HCT116 (cell line): ENCODE measurements at regions of chr1 and their contacts with region 1.

Region 1: GRCh38 chr1:223123011-223123610 is 19.9 kb downstream of the TLR5 start:
- DNase-seq: no peak
- ATAC-seq: peak; percentile 16; the same call in 1 of the 2 replicates
- H3K4me3 ChIP-seq: peak overlapping the region; percentile 42 to 48
- H3K27ac ChIP-seq: no peak overlapping the region
- H3K4me1 ChIP-seq: peaks cover 4 to 20% of the 10 kb centered on the region in 2 experiments; a peak in 3 of 4 replicates
- H3K27me3 ChIP-seq: no peaks in the 10 kb centered on the region
- CTCF ChIP-seq: no peak
- POLR2A ChIP-seq: no peak
- RAD21 ChIP-seq: no peak

Region 2: GRCh38 chr1:222792744-222793143 is 330.4 kb before region 1 on chr1:
- CTCF ChIA-PET with region 1: interaction called, 11 read pairs
- POLR2A ChIA-PET with region 1: no interaction called
- RAD21 ChIA-PET with region 1: no interaction called
- intact Hi-C with region 1: loop called (anchors 2 kb)
- DNase-seq: no peak
- ATAC-seq: peak; percentile 70
- H3K4me3 ChIP-seq: no peak overlapping the region
- H3K27ac ChIP-seq: no peak overlapping the region
- H3K4me1 ChIP-seq: no peaks in the 10 kb centered on the region
- H3K27me3 ChIP-seq: no peaks in the 10 kb centered on the region
- CTCF ChIP-seq: peak; percentile 29 to 88 (median 76); a peak in 5 of 6 replicates
- POLR2A ChIP-seq: no peak
- RAD21 ChIP-seq: peak; percentile 90

Region 3: DNA sequence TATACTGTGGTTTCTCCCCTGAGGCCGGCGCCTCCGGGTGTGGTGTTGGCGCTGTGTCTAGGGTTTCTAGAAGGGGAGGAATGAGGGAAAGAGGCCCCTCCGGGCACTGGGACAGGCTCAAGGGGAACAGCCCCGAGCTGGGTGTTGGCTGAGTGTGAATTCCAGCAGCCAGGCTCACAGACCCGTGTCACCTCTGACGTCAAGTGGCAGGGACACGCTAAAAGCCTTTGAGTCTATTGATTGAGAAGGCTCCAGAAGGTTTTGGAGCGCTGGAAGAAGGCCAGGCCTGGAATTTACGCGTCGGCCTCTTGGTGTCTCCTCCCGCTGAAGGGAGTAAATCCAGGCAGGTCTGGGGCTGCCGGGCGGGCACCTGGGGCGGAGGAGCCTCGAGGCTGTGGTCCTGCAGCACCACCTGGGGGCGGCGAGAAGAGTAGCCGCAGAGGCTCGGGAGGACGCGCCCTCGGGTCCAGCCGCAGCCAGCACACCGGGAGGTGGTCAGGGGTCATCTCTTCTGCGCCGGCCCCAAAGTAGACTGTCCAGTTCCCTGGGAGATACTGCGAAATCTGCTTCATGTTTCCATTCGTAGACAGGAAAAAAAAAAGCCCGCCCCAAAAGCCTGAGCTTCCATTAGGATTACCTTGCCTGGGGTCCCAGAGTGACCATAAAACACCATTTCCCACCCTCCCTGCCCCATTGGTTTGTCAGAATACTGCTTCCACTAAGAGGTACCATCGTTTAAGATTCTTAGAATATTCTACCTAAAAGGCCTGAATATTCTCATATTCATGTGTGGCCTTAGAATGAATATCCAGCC is 41.7 kb before region 1 on chr1:
- CTCF ChIA-PET with region 1: interaction called, 3 read pairs
- POLR2A ChIA-PET with region 1: no interaction called
- RAD21 ChIA-PET with region 1: no interaction called
- intact Hi-C with region 1: loop called (anchors 2 kb)
- DNase-seq: peak; percentile 97
- ATAC-seq: peak; percentile 99
- H3K4me3 ChIP-seq: peak overlapping the region in 1 of 2 experiments; percentile 21; a peak in 1 of 4 replicates
- H3K27ac ChIP-seq: peak overlapping the region; percentile 55
- H3K4me1 ChIP-seq: peaks cover 0 to 5% of the 10 kb centered on the region in 2 experiments; a peak in 2 of 4 replicates
- H3K27me3 ChIP-seq: no peaks in the 10 kb centered on the region
- CTCF ChIP-seq: peak; percentile 90 to 98 (median 91)
- POLR2A ChIP-seq: no peak
- RAD21 ChIP-seq: peak; percentile 100

Region 4: GRCh38 chr1:223088713-223089240 is 34.3 kb before region 1 on chr1:
- CTCF ChIA-PET with region 1: interaction called, 32 read pairs
- POLR2A ChIA-PET with region 1: no interaction called
- RAD21 ChIA-PET with region 1: no interaction called
- intact Hi-C with region 1: no loop called
- DNase-seq: no peak
- ATAC-seq: no peak
- H3K4me3 ChIP-seq: no peak overlapping the region
- H3K27ac ChIP-seq: no peak overlapping the region
- H3K4me1 ChIP-seq: no peaks in the 10 kb centered on the region
- H3K27me3 ChIP-seq: no peaks in the 10 kb centered on the region
- CTCF ChIP-seq: no peak
- POLR2A ChIP-seq: no peak
- RAD21 ChIP-seq: no peak

Region 5: DNA sequence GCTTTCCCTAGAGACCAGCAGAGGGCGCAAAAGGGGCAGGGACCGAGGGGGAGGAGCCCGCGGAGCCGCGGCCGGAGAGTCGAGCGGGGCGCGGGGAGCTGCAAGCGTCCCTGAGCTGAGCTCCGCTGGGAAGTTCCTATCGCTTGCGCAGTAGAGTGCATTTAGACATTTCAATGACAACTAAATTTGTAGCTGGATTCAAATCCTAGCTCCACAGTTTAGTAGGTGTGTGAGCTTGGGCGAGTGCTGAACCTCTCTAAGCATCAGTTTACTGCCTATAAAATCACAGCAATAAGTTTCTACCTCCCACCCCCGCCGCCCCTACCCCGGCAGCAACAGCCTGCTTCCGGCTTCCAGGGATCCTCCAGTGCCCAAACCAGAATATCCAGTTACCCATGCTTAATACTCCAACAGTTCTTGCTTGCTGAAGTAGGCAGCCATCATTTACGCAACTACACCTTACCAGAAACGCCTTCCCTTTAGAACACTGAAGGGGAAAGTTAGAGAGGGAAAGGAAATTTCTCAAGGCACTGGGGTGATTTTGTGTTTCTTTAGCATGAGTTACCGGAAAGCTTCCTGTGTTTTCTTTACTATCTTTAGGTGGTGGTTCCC is 10.8 kb after region 1 on chr1:
- CTCF ChIA-PET with region 1: interaction called, 98 read pairs
- POLR2A ChIA-PET with region 1: interaction called, 7 read pairs
- RAD21 ChIA-PET with region 1: no interaction called
- intact Hi-C with region 1: no loop called
- DNase-seq: peak; percentile 74
- ATAC-seq: peak; percentile 86
- H3K4me3 ChIP-seq: peak overlapping the region; percentile 31 to 50
- H3K27ac ChIP-seq: no peak overlapping the region
- H3K4me1 ChIP-seq: peaks cover 10 to 30% of the 10 kb centered on the region in 2 experiments
- H3K27me3 ChIP-seq: no peaks in the 10 kb centered on the region
- CTCF ChIP-seq: peak; percentile 82 to 93 (median 88)
- POLR2A ChIP-seq: no peak
- RAD21 ChIP-seq: peak; percentile 85